Caco-2 (cell line): ENCODE measurements at regions of chr11 and their contacts with region 1.

Region 1: GRCh38 chr11:111454561-111455192 is 57.5 kb downstream of the BTG4 start:
- DNase-seq: peak; percentile 76 to 78
- H3K4me3 ChIP-seq: no peak overlapping the region
- H3K4me3 Mint-ChIP-seq: no peak overlapping the region
- H3K27ac Mint-ChIP-seq: no peak overlapping the region
- H3K4me1 ChIP-seq: peaks cover 12% of the 10 kb centered on the region
- H3K4me1 Mint-ChIP-seq: peaks cover 12% of the 10 kb centered on the region
- H3K27me3 ChIP-seq: no peaks in the 10 kb centered on the region
- H3K27me3 Mint-ChIP-seq: peaks cover 3% of the 10 kb centered on the region
- CTCF ChIP-seq: peak; percentile 64 to 83

Region 2: DNA sequence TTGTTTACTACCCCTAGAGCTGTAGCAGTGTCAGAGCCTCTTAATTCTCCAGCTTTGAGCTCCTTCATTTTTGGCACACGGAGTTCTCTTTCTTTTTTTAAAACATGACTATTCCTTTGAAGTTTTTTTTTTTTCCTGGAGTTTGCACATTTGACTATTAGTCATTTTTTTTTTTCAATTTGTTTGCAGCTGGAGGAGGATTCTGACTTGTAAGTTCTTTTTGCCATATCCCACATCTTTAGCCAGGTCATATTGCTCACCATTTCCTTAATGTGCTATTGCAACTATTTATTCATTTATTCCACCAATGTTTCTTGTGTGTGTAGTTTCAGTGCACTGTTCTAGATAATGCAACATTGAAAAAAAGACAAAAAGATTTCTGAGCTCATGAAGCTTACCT is 576.2 kb before region 1 on chr11:
- CTCF ChIA-PET with region 1: no interaction called
- POLR2A ChIA-PET with region 1: interaction called, 18 read pairs
- intact Hi-C with region 1: no loop called
- DNase-seq: no peak
- H3K4me3 ChIP-seq: no peak overlapping the region
- H3K4me3 Mint-ChIP-seq: no peak overlapping the region
- H3K27ac Mint-ChIP-seq: no peak overlapping the region
- H3K4me1 ChIP-seq: no peaks in the 10 kb centered on the region
- H3K4me1 Mint-ChIP-seq: no peaks in the 10 kb centered on the region
- H3K27me3 ChIP-seq: no peaks in the 10 kb centered on the region
- H3K27me3 Mint-ChIP-seq: peaks cover 5% of the 10 kb centered on the region
- CTCF ChIP-seq: no peak

Region 3: GRCh38 chr11:111246956-111247355 is 207.7 kb before region 1 on chr11:
- CTCF ChIA-PET with region 1: no interaction called
- POLR2A ChIA-PET with region 1: no interaction called
- intact Hi-C with region 1: no loop called
- DNase-seq: no peak
- H3K4me3 ChIP-seq: no peak overlapping the region
- H3K4me3 Mint-ChIP-seq: no peak overlapping the region
- H3K27ac Mint-ChIP-seq: no peak overlapping the region
- H3K4me1 ChIP-seq: no peaks in the 10 kb centered on the region
- H3K4me1 Mint-ChIP-seq: no peaks in the 10 kb centered on the region
- H3K27me3 ChIP-seq: no peaks in the 10 kb centered on the region
- H3K27me3 Mint-ChIP-seq: peaks cover 34% of the 10 kb centered on the region
- CTCF ChIP-seq: no peak

Region 4: GRCh38 chr11:111520565-111520964 is 65.9 kb after region 1 on chr11:
- CTCF ChIA-PET with region 1: no interaction called
- POLR2A ChIA-PET with region 1: no interaction called
- intact Hi-C with region 1: loop called (anchors 2 kb)
- DNase-seq: no peak
- H3K4me3 ChIP-seq: no peak overlapping the region
- H3K4me3 Mint-ChIP-seq: no peak overlapping the region
- H3K27ac Mint-ChIP-seq: no peak overlapping the region
- H3K4me1 ChIP-seq: peaks cover 42% of the 10 kb centered on the region
- H3K4me1 Mint-ChIP-seq: peaks cover under 1% of the 10 kb centered on the region
- H3K27me3 ChIP-seq: no peaks in the 10 kb centered on the region
- H3K27me3 Mint-ChIP-seq: no peaks in the 10 kb centered on the region
- CTCF ChIP-seq: no peak

Region 5: DNA sequence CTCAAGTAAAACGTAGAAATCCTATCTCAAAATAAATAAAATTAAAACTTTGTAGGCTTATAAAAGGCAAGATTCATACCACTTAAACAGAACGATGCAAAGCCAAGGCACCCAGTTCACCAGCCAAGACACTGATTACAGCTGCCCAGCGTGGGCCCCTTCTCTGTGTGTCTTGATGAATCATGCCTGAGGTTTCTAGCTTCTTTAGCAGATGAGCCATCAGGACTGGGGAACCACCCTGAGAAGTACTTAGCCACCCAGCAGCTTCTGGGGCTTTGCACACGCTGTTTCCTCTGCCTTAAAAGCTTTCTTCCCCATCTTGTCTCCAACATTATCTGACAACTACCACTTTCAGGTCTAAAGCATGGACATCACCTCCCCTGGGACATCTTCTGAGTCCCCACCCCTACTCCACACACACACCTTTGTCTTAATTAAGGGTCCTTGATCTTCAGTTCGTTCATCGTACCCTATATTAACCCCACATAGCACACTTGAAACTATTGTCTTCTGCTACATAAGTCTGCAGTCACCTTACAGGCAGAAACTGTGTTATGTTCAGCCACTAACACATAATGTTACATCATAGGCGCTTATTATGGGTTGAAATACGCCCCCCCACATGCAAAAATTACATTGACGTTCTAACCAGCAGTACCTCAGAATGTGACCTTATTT is 77.1 kb after region 1 on chr11:
- CTCF ChIA-PET with region 1: interaction called, 13 read pairs
- POLR2A ChIA-PET with region 1: no interaction called
- intact Hi-C with region 1: loop called (anchors 1 kb)
- DNase-seq: peak; percentile 59 to 66
- H3K4me3 ChIP-seq: no peak overlapping the region
- H3K4me3 Mint-ChIP-seq: peak overlapping the region; percentile 7
- H3K27ac Mint-ChIP-seq: peak overlapping the region; percentile 43
- H3K4me1 ChIP-seq: peaks cover 45% of the 10 kb centered on the region
- H3K4me1 Mint-ChIP-seq: peaks cover 27% of the 10 kb centered on the region
- H3K27me3 ChIP-seq: no peaks in the 10 kb centered on the region
- H3K27me3 Mint-ChIP-seq: no peaks in the 10 kb centered on the region
- CTCF ChIP-seq: no peak

Region 6: DNA sequence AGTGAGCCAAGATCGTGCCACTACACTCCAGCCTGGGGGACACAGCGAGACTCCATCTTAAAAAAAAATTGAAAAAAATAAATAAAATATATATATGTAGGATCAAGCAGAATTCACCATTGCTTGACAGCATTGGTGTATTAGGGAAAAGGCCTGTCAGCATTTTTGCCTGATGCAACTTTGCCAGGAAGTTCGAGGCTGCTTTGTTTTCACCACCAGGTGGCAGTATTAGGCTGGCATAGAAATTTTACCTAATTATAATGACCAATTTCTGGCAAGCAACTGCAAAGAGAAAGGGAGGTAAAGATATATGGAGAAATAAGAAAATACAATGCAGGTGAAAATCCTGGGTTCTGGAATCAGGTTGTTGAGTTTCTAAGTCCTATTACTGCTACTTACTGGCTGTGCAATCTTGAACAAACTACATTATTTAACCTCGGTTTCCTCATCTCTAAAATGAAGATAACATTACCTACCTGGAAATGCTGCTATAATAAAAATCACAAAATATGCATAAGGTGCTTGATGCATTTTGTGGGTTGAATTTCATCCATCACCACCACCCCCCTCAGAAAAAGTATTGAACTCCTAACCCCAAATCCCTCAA is 110.5 kb after region 1 on chr11:
- CTCF ChIA-PET with region 1: no interaction called
- POLR2A ChIA-PET with region 1: no interaction called
- intact Hi-C with region 1: loop called (anchors 1 kb)
- DNase-seq: peak; percentile 73 to 86
- H3K4me3 ChIP-seq: no peak overlapping the region
- H3K4me3 Mint-ChIP-seq: no peak overlapping the region
- H3K27ac Mint-ChIP-seq: no peak overlapping the region
- H3K4me1 ChIP-seq: no peaks in the 10 kb centered on the region
- H3K4me1 Mint-ChIP-seq: peaks cover 7% of the 10 kb centered on the region
- H3K27me3 ChIP-seq: no peaks in the 10 kb centered on the region
- H3K27me3 Mint-ChIP-seq: no peaks in the 10 kb centered on the region
- CTCF ChIP-seq: peak; percentile 93 to 98

Region 7: DNA sequence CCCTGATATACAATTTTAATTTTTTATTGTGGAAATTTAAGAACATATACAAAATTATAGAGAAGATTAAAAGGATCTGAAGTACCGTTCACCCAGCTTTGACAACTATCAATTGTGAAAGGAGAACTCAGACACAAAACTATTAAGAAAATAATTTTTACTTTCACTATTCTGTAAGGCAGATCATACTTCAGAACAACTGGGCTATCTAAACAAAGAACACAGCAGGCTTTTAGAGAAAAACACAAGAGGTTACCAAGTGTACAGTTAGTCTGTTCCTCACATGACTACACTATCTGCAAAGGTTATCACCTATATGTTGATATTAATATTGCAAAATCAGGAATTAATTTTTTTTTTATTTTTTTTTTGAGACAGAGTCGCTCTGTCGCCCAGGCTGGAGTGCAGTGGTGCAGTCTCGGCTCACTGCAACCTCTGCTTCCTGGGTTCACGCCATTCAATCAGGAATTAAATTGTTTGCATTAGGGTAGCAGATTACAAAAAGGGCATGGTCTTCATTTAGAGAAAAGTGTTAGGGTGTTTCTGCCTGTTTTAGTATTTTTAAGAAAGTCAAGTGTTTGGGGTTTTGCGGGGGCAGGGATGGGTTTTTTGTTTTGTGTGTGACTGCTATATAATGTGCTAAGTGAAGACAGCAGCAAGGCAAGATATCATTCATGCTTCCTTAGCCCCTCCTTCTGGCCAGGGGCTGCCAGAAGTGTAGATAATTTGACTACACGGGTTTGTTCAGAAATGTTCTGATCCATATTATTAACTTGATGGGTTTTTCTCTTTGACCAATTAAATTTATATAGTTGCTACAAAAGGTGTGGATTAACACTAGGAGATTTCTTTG is 119.9 kb after region 1 on chr11:
- CTCF ChIA-PET with region 1: no interaction called
- POLR2A ChIA-PET with region 1: no interaction called
- intact Hi-C with region 1: loop called (anchors 2 kb)
- DNase-seq: no peak
- H3K4me3 ChIP-seq: no peak overlapping the region
- H3K4me3 Mint-ChIP-seq: no peak overlapping the region
- H3K27ac Mint-ChIP-seq: no peak overlapping the region
- H3K4me1 ChIP-seq: peaks cover 17% of the 10 kb centered on the region
- H3K4me1 Mint-ChIP-seq: peaks cover 24% of the 10 kb centered on the region
- H3K27me3 ChIP-seq: no peaks in the 10 kb centered on the region
- H3K27me3 Mint-ChIP-seq: no peaks in the 10 kb centered on the region
- CTCF ChIP-seq: peak in 1 of 2 experiments; percentile 9

Region 8: DNA sequence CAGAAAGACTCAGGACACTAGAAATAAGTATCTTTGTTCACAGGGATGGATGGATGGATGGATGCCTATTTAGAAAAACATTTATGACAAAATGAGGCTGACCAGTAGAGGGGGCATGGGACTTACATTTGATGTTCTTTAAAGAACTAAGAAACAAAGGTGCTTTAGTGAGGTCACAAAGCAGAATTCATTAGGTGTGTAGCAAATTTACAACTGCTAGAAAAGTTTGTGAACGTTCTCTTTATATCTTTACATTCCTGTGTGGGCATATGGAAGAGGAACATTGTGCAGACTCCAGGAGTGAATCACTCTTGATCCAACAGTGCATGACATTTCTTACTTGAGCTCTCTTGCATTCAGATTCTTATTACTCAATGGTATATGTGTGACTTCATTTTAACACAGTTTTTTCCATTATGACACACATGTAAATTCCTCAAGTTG is 131.7 kb after region 1 on chr11:
- CTCF ChIA-PET with region 1: interaction called, 3 read pairs
- POLR2A ChIA-PET with region 1: no interaction called
- intact Hi-C with region 1: loop called (anchors 5 kb)
- DNase-seq: peak in 1 of 2 experiments; percentile 71
- H3K4me3 ChIP-seq: no peak overlapping the region
- H3K4me3 Mint-ChIP-seq: no peak overlapping the region
- H3K27ac Mint-ChIP-seq: no peak overlapping the region
- H3K4me1 ChIP-seq: no peaks in the 10 kb centered on the region
- H3K4me1 Mint-ChIP-seq: no peaks in the 10 kb centered on the region
- H3K27me3 ChIP-seq: no peaks in the 10 kb centered on the region
- H3K27me3 Mint-ChIP-seq: no peaks in the 10 kb centered on the region
- CTCF ChIP-seq: peak; percentile 83 to 91